ENCODE measurements at regions of chr2 and their contacts with region 1.

Region 1: DNA sequence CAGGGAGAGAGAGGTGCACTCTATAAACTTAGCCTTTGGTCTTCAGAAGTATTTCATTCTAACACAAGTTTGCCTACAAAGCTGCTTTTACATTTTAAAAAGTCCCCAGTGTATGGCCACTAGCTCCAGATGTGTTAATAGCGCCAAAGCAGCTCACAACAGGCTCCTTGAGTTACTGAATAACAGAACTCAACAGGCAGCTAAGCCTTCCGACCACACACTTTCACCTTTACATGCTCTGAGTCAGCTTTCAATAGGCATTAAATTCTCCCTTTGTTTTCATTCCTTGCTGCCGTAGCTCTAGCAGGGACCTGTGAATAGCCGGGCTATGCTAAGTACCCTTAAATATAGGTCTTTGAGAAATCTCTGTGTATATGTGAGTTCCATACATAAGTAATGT is 262.8 kb upstream of the PARD3B start:
- H3K4me3 Mint-ChIP-seq: no peak overlapping the region
- H3K27ac Mint-ChIP-seq: no peak overlapping the region
- H3K4me1 Mint-ChIP-seq: no peaks in the 10 kb centered on the region
- H3K27me3 Mint-ChIP-seq: peaks cover 2% of the 10 kb centered on the region

Region 2: GRCh38 chr2:204197336-204198005 is 85.1 kb before region 1 on chr2:
- intact Hi-C with region 1: no loop called
- H3K4me3 Mint-ChIP-seq: no peak overlapping the region
- H3K27ac Mint-ChIP-seq: no peak overlapping the region
- H3K4me1 Mint-ChIP-seq: no peaks in the 10 kb centered on the region
- H3K27me3 Mint-ChIP-seq: no peaks in the 10 kb centered on the region

Region 3: GRCh38 chr2:204313256-204313655 is 30.7 kb after region 1 on chr2:
- intact Hi-C with region 1: loop called (anchors 1 kb)
- H3K4me3 Mint-ChIP-seq: no peak overlapping the region
- H3K27ac Mint-ChIP-seq: no peak overlapping the region
- H3K4me1 Mint-ChIP-seq: no peaks in the 10 kb centered on the region
- H3K27me3 Mint-ChIP-seq: peaks cover 1% of the 10 kb centered on the region

Region 4: DNA sequence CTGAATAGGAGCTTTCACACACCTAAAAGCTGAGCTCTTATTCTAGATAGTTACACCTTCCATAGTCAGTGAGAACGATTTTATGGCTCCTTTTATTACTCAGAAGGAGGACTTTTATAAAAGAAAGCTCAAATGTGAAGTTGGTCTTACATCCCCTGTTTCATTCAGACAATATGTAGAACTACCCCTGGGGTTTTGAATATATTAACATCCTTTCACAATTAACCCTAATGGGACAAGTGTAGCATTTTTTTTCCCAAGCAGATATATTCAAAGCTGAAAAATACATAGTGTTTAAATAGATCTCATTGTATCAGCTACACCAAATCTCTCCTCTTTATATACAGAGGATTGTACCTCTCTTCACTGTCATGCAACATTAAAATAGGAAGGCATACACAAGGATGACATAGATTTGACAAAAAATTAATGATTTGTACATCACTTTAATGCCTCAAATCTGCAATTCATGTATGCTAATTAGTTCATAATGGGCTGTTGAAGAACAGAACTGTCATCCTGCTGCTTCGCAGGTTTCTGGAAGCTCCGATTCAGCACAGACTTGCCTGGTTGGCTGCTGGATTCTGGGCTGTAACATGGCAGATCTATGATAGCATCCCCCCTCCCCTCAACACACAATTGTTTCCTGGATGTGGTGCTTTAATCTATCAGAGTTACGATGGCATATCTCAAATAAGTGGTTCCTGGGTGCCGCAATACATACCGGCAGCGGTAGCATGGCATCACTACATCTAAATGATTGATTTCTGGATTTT is 133.1 kb after region 1 on chr2:
- intact Hi-C with region 1: no loop called
- H3K4me3 Mint-ChIP-seq: no peak overlapping the region
- H3K27ac Mint-ChIP-seq: no peak overlapping the region
- H3K4me1 Mint-ChIP-seq: no peaks in the 10 kb centered on the region
- H3K27me3 Mint-ChIP-seq: no peaks in the 10 kb centered on the region